Calu3 (cell line): ENCODE measurements at regions of chr10 and their contacts with region 1.

Region 1: GRCh38 chr10:99430451-99431189 is at the start of gene GOT1:
- DNase-seq: peak; percentile 89
- H3K4me3 Mint-ChIP-seq: peak within 1 kb of the TSS; percentile 88
- H3K27ac Mint-ChIP-seq: peak within 1 kb of the TSS; percentile 93
- H3K4me1 Mint-ChIP-seq: peaks cover 11% of the 10 kb centered on the region
- H3K27me3 Mint-ChIP-seq: no peaks in the 10 kb centered on the region
- CTCF ChIP-seq: no peak
- total RNA-seq, gene GOT1: 33.9 and 35.6 TPM in 2 replicates

Region 2: GRCh38 chr10:99395750-99396445 is 34.7 kb before region 1 on chr10:
- CTCF ChIA-PET with region 1: interaction called, 3 read pairs
- intact Hi-C with region 1: loop called (anchors 1 kb)
- DNase-seq: no peak
- H3K4me3 Mint-ChIP-seq: peak overlapping the region; percentile 12
- H3K27ac Mint-ChIP-seq: peak overlapping the region; percentile 54
- H3K4me1 Mint-ChIP-seq: peaks cover 11% of the 10 kb centered on the region
- H3K27me3 Mint-ChIP-seq: no peaks in the 10 kb centered on the region
- CTCF ChIP-seq: no peak

Region 3: GRCh38 chr10:99540657-99541531 is 110.3 kb after region 1 on chr10:
- CTCF ChIA-PET with region 1: interaction called, 3 read pairs
- intact Hi-C with region 1: loop called (anchors 5 kb)
- DNase-seq: peak; percentile 57
- H3K4me3 Mint-ChIP-seq: peak overlapping the region; percentile 60
- H3K27ac Mint-ChIP-seq: peak overlapping the region; percentile 50
- H3K4me1 Mint-ChIP-seq: no peaks in the 10 kb centered on the region
- H3K27me3 Mint-ChIP-seq: peaks cover 92% of the 10 kb centered on the region
- CTCF ChIP-seq: no peak

Region 4: GRCh38 chr10:99993701-99994689 is 563.4 kb after region 1 on chr10:
- CTCF ChIA-PET with region 1: no interaction called
- intact Hi-C with region 1: no loop called
- DNase-seq: no peak
- H3K4me3 Mint-ChIP-seq: no peak overlapping the region
- H3K27ac Mint-ChIP-seq: no peak overlapping the region
- H3K4me1 Mint-ChIP-seq: no peaks in the 10 kb centered on the region
- H3K27me3 Mint-ChIP-seq: no peaks in the 10 kb centered on the region
- CTCF ChIP-seq: no peak